CD4-positive, alpha-beta memory T cell (primary cell): ENCODE measurements at regions of chr14 and their contacts with region 1.

Region 1: GRCh38 chr14:23095196-23096108 is at the start of gene C14orf119:
- DNase-seq: peak; percentile 99 to 100 (median 100)
- H3K4me3 ChIP-seq: peak within 1 kb of the TSS; percentile 90 to 91
- H3K4me3 Mint-ChIP-seq: no peak within 1 kb of the TSS
- H3K27ac ChIP-seq: peak within 1 kb of the TSS; percentile 94
- H3K27ac Mint-ChIP-seq: no peak within 1 kb of the TSS
- H3K4me1 ChIP-seq: peaks cover 45% of the 10 kb centered on the region
- H3K4me1 Mint-ChIP-seq: peaks cover 17 to 31% (median 24%) of the 10 kb centered on the region in 4 donors
- H3K27me3 ChIP-seq: no peaks in the 10 kb centered on the region
- H3K27me3 Mint-ChIP-seq: no peaks in the 10 kb centered on the region
- total RNA-seq, gene C14orf119: 49.7 to 54.0 TPM

Region 2: DNA sequence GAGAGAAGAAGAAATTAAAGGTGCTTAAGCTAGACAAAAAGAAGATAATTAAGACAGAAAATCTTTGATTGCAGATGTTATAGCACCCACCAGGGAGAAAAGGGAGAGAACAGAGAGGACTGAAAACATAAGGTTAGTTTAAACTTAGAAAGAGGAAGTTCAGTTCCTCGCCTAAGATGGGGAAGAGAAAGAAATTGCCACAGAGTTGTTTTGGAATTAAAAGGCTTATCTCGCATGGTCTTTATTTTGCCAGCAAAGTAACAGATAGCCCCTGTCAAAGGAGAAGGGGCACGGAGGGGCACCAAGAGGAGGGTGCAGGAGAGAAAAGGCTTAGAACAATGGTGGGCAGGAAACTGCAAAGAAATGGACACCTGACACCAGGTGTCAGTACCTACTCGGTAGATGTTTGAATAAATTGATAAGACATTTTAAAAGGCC is 346.8 kb before region 1 on chr14:
- CTCF ChIA-PET with region 1: no interaction called
- POLR2A ChIA-PET with region 1: no interaction called
- intact Hi-C with region 1: no loop called
- DNase-seq: no peak
- H3K4me3 ChIP-seq: no peak overlapping the region
- H3K4me3 Mint-ChIP-seq: no peak overlapping the region
- H3K27ac ChIP-seq: no peak overlapping the region
- H3K27ac Mint-ChIP-seq: peak overlapping the region in 1 of 7 donors; percentile 31
- H3K4me1 ChIP-seq: no peaks in the 10 kb centered on the region
- H3K4me1 Mint-ChIP-seq: peaks cover 0 to 2% (median 0%) of the 10 kb centered on the region in 4 donors
- H3K27me3 ChIP-seq: no peaks in the 10 kb centered on the region
- H3K27me3 Mint-ChIP-seq: peaks cover 23 to 37% of the 10 kb centered on the region in 2 donors

Region 3: DNA sequence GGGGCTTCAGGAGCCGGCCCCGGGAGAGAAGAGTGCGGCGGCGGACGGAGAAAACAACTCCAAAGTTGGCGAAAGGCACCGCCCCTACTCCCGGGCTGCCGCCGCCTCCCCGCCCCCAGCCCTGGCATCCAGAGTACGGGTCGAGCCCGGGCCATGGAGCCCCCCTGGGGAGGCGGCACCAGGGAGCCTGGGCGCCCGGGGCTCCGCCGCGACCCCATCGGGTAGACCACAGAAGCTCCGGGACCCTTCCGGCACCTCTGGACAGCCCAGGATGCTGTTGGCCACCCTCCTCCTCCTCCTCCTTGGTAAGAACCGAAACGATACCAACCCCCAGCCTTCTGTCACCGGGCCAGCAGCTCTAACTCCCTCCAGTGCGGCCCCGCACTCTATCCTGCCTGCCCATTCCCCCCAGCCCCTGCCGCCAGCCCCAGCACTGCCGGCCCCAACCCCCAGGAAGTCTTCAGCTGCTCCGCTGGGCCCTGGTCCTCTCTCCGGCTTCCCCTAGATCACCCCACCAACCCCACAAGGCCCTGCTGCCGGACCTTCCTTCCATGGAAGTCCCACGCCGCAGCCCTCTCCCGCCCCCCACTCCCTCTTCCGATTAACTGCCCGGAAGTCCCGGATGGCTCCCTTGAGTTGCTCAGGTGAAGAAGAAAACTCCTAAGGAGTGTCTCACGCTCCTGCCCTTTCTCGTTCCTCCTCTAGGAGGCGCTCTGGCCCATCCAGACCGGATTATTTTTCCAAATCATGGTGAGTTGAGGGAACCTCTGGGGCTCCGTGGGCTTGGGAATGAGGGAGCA is 223.2 kb before region 1 on chr14:
- CTCF ChIA-PET with region 1: no interaction called
- POLR2A ChIA-PET with region 1: interaction called, 3 read pairs
- intact Hi-C with region 1: loop called (anchors 1 kb)
- DNase-seq: peak; percentile 66 to 78 (median 73)
- H3K4me3 ChIP-seq: peak overlapping the region; percentile 24 to 55
- H3K4me3 Mint-ChIP-seq: peak overlapping the region; percentile 88 to 98 (median 97)
- H3K27ac ChIP-seq: peak overlapping the region; percentile 79
- H3K27ac Mint-ChIP-seq: peak overlapping the region; percentile 72 to 100 (median 89)
- H3K4me1 ChIP-seq: peaks cover 48% of the 10 kb centered on the region
- H3K4me1 Mint-ChIP-seq: peaks cover 17 to 46% (median 33%) of the 10 kb centered on the region in 4 donors
- H3K27me3 ChIP-seq: no peaks in the 10 kb centered on the region
- H3K27me3 Mint-ChIP-seq: no peaks in the 10 kb centered on the region

Region 4: DNA sequence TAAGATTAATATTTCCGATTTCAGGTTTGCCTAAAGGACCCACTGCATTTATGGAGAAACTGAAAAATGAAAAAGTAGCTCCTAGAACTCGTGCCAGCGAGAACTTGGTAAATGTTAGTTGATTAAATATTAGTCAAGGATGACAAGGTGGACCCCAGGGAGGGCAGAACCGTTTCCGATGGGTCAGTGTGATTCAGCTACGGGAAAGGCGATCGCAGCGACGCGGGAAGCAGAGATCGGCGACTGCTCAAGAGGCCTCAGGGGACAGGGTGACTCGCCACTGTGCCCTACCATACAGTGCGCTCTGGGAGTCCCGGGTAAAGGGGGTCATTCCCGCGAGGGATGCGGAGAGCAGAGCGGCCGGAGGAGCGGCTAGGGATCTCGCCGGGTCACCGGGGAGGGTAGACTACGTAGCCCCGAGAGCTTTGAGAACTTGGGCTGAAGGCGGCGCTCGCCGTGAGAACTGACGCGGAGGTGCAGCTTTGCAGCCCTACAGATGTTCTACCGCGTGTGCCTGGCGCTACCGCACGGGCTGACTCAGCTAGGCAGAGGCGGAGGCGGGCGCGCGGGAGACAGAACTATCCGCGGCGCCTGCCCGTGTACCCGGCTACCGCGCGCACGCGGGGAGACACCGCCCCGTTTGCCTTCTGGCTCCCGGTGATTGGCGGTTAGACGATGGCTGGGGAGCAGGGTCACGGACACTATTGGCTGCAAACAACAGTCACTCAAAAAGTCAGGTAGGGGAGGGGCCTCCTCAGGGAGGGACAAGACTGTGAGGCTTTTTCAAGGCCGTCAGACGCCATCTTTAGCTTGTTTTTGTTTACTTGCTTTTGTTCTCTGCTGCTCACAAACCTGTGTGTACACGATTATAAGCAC is 88.7 kb before region 1 on chr14:
- CTCF ChIA-PET with region 1: interaction called, 5 read pairs
- POLR2A ChIA-PET with region 1: interaction called, 32 read pairs
- intact Hi-C with region 1: no loop called
- DNase-seq: peak; percentile 99
- H3K4me3 ChIP-seq: peak overlapping the region; percentile 96
- H3K4me3 Mint-ChIP-seq: peak overlapping the region; percentile 94 to 99 (median 97)
- H3K27ac ChIP-seq: peak overlapping the region; percentile 80
- H3K27ac Mint-ChIP-seq: peak overlapping the region; percentile 90 to 99 (median 97)
- H3K4me1 ChIP-seq: peaks cover 37% of the 10 kb centered on the region
- H3K4me1 Mint-ChIP-seq: peaks cover 17 to 52% (median 34%) of the 10 kb centered on the region in 4 donors
- H3K27me3 ChIP-seq: no peaks in the 10 kb centered on the region
- H3K27me3 Mint-ChIP-seq: no peaks in the 10 kb centered on the region

Region 5: DNA sequence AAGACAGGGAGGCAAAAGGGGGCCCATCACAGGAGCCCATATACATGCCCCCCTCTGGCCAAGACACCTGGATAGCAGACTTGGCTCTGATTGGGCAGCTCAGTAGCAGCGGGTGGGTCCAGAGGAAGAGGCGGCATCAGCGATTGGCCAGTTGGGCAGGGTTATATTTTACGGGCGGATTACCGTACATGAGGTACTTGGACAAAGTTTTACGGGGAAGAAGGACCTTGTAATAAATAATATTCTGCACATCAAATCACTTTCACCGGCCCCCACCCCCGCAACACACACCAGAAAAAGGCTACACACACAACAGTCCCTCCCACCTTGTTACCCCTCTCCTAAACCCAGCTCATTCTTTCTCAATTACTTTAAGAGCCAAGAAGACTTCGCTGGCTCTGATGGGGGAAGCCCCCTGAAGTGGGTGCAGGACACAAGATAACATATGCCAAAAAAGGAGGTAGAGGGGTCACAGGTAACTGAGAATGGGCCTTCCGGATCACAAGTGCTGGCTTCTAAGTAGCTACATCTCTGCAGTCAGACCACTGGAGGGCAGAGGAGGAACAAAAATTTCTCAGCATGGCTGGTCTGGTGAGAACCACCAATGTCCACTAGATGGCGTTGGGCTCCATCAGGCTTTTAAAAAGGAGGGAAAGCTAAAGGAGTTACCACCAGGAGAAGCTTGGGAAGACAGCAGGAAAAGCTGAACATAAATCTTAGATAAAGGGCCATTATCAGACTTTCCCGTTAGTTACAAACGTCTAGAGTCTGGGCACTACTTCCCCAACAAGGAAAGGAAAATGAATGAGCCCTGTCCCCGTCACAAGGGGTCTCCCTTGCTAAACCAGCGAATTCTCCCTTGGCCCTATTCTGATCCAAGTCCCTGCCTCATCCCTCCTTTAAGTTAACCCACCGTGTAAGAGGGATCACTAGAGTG is 26.7 kb before region 1 on chr14:
- CTCF ChIA-PET with region 1: interaction called, 42 read pairs
- POLR2A ChIA-PET with region 1: interaction called, 37 read pairs
- intact Hi-C with region 1: loop called (anchors 1 kb)
- DNase-seq: peak; percentile 77 to 81 (median 78)
- H3K4me3 ChIP-seq: no peak overlapping the region
- H3K4me3 Mint-ChIP-seq: peak overlapping the region in 7 of 8 donors; percentile 34 to 74 (median 61)
- H3K27ac ChIP-seq: no peak overlapping the region
- H3K27ac Mint-ChIP-seq: peak overlapping the region; percentile 34 to 93 (median 87)
- H3K4me1 ChIP-seq: peaks cover 28% of the 10 kb centered on the region
- H3K4me1 Mint-ChIP-seq: peaks cover 19 to 41% (median 32%) of the 10 kb centered on the region in 4 donors
- H3K27me3 ChIP-seq: no peaks in the 10 kb centered on the region
- H3K27me3 Mint-ChIP-seq: no peaks in the 10 kb centered on the region

Region 6: DNA sequence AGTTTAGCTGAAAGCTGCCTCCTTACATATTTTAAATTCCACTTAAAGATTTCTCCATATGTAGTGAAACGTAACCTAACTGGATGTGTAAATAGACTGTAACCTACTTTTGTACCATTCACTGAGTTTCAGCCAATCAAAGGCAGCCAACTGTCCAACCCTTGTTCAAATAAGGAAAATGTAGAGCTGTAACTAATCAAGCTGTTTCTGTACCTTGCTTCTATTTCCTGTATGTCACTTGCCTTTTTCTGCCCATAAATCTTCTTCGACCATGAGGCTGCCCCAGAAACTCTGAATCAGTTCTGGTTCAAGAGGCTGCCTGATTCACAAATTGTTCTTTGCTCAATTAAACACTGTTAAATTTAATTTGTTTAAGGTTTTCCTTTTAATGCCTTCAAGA is 81.7 kb after region 1 on chr14:
- CTCF ChIA-PET with region 1: no interaction called
- POLR2A ChIA-PET with region 1: no interaction called
- intact Hi-C with region 1: no loop called
- DNase-seq: no peak
- H3K4me3 ChIP-seq: no peak overlapping the region
- H3K4me3 Mint-ChIP-seq: no peak overlapping the region
- H3K27ac ChIP-seq: no peak overlapping the region
- H3K27ac Mint-ChIP-seq: peak overlapping the region in 2 of 7 donors; percentile 32 to 65
- H3K4me1 ChIP-seq: peaks cover 5% of the 10 kb centered on the region
- H3K4me1 Mint-ChIP-seq: peaks cover 0 to 19% (median 9%) of the 10 kb centered on the region in 4 donors
- H3K27me3 ChIP-seq: peaks cover 7% of the 10 kb centered on the region
- H3K27me3 Mint-ChIP-seq: peaks cover 19 to 36% of the 10 kb centered on the region in 2 donors

Region 7: DNA sequence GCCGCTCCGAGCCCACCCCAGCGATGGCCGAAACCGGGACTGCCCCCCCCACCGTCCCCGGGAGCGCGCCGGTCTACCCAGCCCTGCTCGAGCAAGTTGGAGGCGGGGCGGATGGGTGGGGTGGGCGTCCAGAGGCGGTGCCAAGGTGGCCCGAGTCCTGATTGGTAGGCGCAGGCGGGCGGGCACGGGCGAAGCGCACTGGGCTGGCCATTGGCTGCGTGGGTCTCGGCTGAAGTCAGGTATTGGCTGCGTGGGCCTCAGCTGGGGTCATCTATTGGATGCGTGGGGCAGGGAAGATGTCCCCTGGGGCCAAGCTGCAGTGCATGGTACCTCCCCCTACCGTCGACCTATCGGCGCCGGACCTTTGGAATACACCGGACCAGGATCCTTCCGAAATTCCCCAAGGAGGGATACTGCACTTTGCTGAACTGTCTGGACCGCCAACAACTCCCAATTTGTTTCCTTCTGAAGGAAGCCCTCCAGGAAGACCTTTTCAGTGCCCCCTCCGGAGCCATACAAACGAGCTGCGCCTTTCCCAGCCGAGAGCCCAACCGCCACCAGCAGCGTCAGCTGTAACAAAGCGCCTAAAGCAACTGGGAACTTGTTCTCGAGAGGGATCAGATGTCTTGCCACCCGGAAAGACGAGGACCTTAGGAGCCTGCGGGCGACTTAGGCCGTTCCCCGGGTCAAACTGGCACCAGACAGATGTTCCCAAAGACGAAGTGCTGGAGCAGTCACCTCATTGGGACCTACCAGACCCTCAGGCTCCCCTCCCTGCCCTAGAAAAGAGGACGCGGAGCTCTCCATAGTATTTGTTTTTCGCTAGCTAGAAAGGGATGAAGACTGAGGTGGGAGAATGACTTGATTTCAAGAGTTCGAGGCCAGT is 190.8 kb after region 1 on chr14 and contains the start of gene HOMEZ:
- CTCF ChIA-PET with region 1: no interaction called
- POLR2A ChIA-PET with region 1: interaction called, 10 read pairs
- intact Hi-C with region 1: loop called (anchors 1 kb)
- DNase-seq: peak; percentile 94 to 98 (median 95)
- H3K4me3 ChIP-seq: peak within 1 kb of the TSS; percentile 71 to 85
- H3K4me3 Mint-ChIP-seq: peak within 1 kb of the TSS; percentile 95 to 99 (median 98)
- H3K27ac ChIP-seq: peak within 1 kb of the TSS; percentile 75
- H3K27ac Mint-ChIP-seq: peak within 1 kb of the TSS; percentile 90 to 98 (median 96)
- H3K4me1 ChIP-seq: peaks cover 23% of the 10 kb centered on the region
- H3K4me1 Mint-ChIP-seq: peaks cover 13 to 36% (median 24%) of the 10 kb centered on the region in 4 donors
- H3K27me3 ChIP-seq: no peaks in the 10 kb centered on the region
- H3K27me3 Mint-ChIP-seq: no peaks in the 10 kb centered on the region
- total RNA-seq, gene HOMEZ: 21.0 to 21.7 TPM

Region 8: DNA sequence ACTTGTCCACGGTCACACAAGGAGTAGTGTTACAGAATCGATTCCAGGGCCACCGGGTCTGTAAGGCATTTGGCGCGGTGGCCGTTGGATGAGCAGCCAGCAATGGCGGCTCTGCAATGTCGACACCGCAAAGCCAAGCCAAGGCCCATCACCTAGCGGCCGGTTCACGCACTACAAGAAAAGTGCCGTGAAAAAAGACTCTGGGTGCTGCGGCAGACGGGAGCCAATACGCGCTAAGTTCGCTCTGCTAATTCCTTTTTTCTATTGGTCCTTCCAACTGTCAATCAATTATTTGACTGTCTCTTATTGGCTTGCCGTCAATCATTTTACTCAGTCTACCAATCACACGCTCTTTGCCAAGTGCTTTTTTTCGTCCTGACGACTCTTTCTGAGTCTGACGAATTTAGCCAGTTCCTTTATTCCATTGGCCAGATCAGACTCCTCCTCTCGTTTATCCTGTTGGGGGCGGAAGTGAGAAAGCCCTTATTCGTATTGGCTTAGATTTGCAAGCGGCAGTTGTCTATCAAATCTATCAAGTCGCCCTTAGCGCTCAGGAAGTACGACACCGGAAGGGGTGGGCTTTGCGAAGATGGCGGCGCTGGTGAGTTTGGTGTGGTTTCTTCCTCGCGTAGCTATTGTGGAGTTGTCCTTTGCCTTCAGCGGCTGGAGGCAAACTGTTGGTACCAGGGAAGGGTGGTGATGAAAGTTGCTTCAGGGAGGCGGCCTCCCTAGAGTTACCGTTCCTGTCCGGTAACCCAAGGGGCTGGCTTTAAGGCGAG is 373.9 kb after region 1 on chr14 and contains the start of gene NGDN:
- CTCF ChIA-PET with region 1: interaction called, 5 read pairs
- POLR2A ChIA-PET with region 1: no interaction called
- intact Hi-C with region 1: loop called (anchors 5 kb)
- DNase-seq: peak; percentile 93 to 99 (median 97)
- H3K4me3 ChIP-seq: peak within 1 kb of the TSS; percentile 75 to 78
- H3K4me3 Mint-ChIP-seq: peak within 1 kb of the TSS in 1 of 8 donors; percentile 35
- H3K27ac ChIP-seq: peak within 1 kb of the TSS; percentile 89
- H3K27ac Mint-ChIP-seq: peak within 1 kb of the TSS in 3 of 7 donors; percentile 36 to 78 (median 43)
- H3K4me1 ChIP-seq: peaks cover 17% of the 10 kb centered on the region
- H3K4me1 Mint-ChIP-seq: peaks cover 0 to 7% (median 6%) of the 10 kb centered on the region in 4 donors
- H3K27me3 ChIP-seq: no peaks in the 10 kb centered on the region
- H3K27me3 Mint-ChIP-seq: no peaks in the 10 kb centered on the region
- total RNA-seq, gene NGDN: 60.7 to 63.5 TPM